ENCODE measurements at regions of chr3 and their contacts with region 1.

Region 1: GRCh38 chr3:141311496-141312353 is 56.6 kb upstream of the ZBTB38 start:
- DNase-seq: peak; percentile 97
- ATAC-seq: peak; percentile 98
- H3K4me3 ChIP-seq: peak overlapping the region; percentile 71 to 96 (median 93)
- H3K4me3 Mint-ChIP-seq: peak overlapping the region; percentile 98
- H3K27ac ChIP-seq: peak overlapping the region; percentile 65 to 78
- H3K27ac Mint-ChIP-seq: peak overlapping the region; percentile 97
- H3K4me1 ChIP-seq: peaks cover 15 to 17% of the 10 kb centered on the region in 2 donors
- H3K4me1 Mint-ChIP-seq: peaks cover 23% of the 10 kb centered on the region
- H3K27me3 ChIP-seq: no peaks in the 10 kb centered on the region
- H3K27me3 Mint-ChIP-seq: no peaks in the 10 kb centered on the region
- CTCF ChIP-seq: peak; percentile 72

Region 2: GRCh38 chr3:140941434-140942220 is 370.1 kb before region 1 on chr3 and contains the start of gene SLC25A36:
- CTCF ChIA-PET with region 1: no interaction called
- POLR2A ChIA-PET with region 1: no interaction called
- intact Hi-C with region 1: loop called (anchors 1 kb)
- DNase-seq: peak; percentile 99
- ATAC-seq: peak; percentile 96
- H3K4me3 ChIP-seq: peak within 1 kb of the TSS; percentile 63 to 86 (median 80)
- H3K4me3 Mint-ChIP-seq: peak within 1 kb of the TSS; percentile 95
- H3K27ac ChIP-seq: peak within 1 kb of the TSS; percentile 91 to 95
- H3K27ac Mint-ChIP-seq: peak within 1 kb of the TSS; percentile 97
- H3K4me1 ChIP-seq: peaks cover 11 to 26% of the 10 kb centered on the region in 2 donors
- H3K4me1 Mint-ChIP-seq: peaks cover 42% of the 10 kb centered on the region
- H3K27me3 ChIP-seq: no peaks in the 10 kb centered on the region
- H3K27me3 Mint-ChIP-seq: no peaks in the 10 kb centered on the region
- CTCF ChIP-seq: no peak
- total RNA-seq, gene SLC25A36: 76.0 and 86.3 TPM in 2 replicates

Region 3: DNA sequence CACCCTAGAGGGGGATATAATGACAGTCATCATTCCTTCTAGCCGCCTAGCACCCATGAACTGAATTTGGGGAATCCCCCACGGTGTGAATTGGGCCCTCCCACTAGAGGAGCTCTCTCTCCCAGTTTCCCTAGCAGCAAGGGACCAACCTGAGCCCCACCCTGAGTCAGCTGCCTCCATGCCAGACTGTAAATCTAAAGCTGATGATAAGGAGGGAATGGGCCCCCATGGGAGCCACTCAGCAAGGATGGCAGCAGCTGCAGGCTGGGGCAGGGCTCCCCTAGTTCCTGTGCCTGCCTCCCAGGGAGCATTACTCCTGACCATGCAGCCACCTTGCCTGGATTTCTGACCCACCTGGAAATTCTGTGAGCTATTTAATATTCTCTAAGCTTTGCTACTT is 137.1 kb before region 1 on chr3:
- CTCF ChIA-PET with region 1: no interaction called
- POLR2A ChIA-PET with region 1: no interaction called
- intact Hi-C with region 1: no loop called
- DNase-seq: no peak
- ATAC-seq: no peak
- H3K4me3 ChIP-seq: no peak overlapping the region
- H3K4me3 Mint-ChIP-seq: no peak overlapping the region
- H3K27ac ChIP-seq: no peak overlapping the region
- H3K27ac Mint-ChIP-seq: no peak overlapping the region
- H3K4me1 ChIP-seq: no peaks in the 10 kb centered on the region
- H3K4me1 Mint-ChIP-seq: no peaks in the 10 kb centered on the region
- H3K27me3 ChIP-seq: peaks cover 0 to 4% (median 1%) of the 10 kb centered on the region in 4 experiments
- H3K27me3 Mint-ChIP-seq: peaks cover 33% of the 10 kb centered on the region
- CTCF ChIP-seq: no peak

Region 4: DNA sequence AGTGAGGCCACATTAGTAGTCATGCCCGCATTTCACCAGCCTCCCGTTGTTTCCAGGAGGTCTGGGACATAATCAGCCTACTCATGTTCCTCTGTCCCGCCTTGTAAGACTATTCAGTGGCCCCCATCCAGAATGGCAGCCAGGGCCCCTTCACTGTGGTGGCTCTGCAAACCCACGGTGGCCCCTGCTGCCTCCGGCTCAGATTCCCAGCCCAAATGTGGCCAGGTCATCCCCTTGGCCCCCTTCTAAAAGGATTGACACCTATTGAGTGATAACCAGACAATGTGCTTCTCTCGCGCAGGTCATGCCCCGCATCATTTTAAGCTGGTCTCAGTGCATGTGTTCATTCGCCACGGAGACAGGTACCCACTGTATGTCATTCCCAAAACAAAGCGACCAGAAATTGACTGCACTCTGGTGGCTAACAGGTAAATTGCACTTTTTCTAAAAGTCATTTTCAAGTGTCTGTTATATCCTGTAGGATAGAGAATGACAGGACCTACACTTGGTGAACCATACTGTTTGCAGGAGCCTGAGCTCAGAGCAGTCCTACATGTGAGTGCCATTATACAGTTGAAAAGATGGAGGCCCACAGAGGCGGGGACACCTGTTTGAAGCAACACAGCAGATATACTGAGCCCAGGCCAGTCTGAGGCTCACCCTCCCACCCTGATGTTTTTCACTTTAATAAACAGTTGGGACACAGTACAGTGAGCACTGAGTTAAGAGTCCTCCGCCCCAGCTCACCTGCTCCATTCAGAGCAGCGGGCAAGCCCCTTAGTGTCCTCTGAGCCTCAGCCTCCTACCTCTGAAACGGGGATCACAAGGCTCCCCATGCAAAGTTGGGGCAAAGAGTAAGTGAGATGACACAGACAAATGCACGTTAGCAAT is 32.4 kb before region 1 on chr3:
- CTCF ChIA-PET with region 1: no interaction called
- POLR2A ChIA-PET with region 1: no interaction called
- intact Hi-C with region 1: no loop called
- DNase-seq: peak; percentile 38
- ATAC-seq: peak; percentile 54
- H3K4me3 ChIP-seq: no peak overlapping the region
- H3K4me3 Mint-ChIP-seq: no peak overlapping the region
- H3K27ac ChIP-seq: no peak overlapping the region
- H3K27ac Mint-ChIP-seq: no peak overlapping the region
- H3K4me1 ChIP-seq: no peaks in the 10 kb centered on the region
- H3K4me1 Mint-ChIP-seq: peaks cover 4% of the 10 kb centered on the region
- H3K27me3 ChIP-seq: no peaks in the 10 kb centered on the region
- H3K27me3 Mint-ChIP-seq: no peaks in the 10 kb centered on the region
- CTCF ChIP-seq: peak; percentile 54

Region 5: GRCh38 chr3:141360888-141361598 is 49.3 kb after region 1 on chr3:
- CTCF ChIA-PET with region 1: interaction called, 23 read pairs
- POLR2A ChIA-PET with region 1: interaction called, 12 read pairs
- intact Hi-C with region 1: no loop called
- DNase-seq: peak; percentile 54
- ATAC-seq: peak; percentile 65
- H3K4me3 ChIP-seq: no peak overlapping the region
- H3K4me3 Mint-ChIP-seq: peak overlapping the region; percentile 3
- H3K27ac ChIP-seq: no peak overlapping the region
- H3K27ac Mint-ChIP-seq: no peak overlapping the region
- H3K4me1 ChIP-seq: no peaks in the 10 kb centered on the region
- H3K4me1 Mint-ChIP-seq: no peaks in the 10 kb centered on the region
- H3K27me3 ChIP-seq: no peaks in the 10 kb centered on the region
- H3K27me3 Mint-ChIP-seq: no peaks in the 10 kb centered on the region
- CTCF ChIP-seq: peak; percentile 58

Region 6: GRCh38 chr3:141402476-141403171 is 90.9 kb after region 1 on chr3:
- CTCF ChIA-PET with region 1: interaction called, 8 read pairs
- POLR2A ChIA-PET with region 1: interaction called, 4 read pairs
- intact Hi-C with region 1: loop called (anchors 1 kb)
- DNase-seq: no peak
- ATAC-seq: peak; percentile 61
- H3K4me3 ChIP-seq: peak overlapping the region; percentile 37 to 83 (median 78)
- H3K4me3 Mint-ChIP-seq: peak overlapping the region; percentile 95
- H3K27ac ChIP-seq: peak overlapping the region; percentile 35 to 90
- H3K27ac Mint-ChIP-seq: peak overlapping the region; percentile 98
- H3K4me1 ChIP-seq: peaks cover 8 to 14% of the 10 kb centered on the region in 2 donors
- H3K4me1 Mint-ChIP-seq: peaks cover 48% of the 10 kb centered on the region
- H3K27me3 ChIP-seq: no peaks in the 10 kb centered on the region
- H3K27me3 Mint-ChIP-seq: no peaks in the 10 kb centered on the region
- CTCF ChIP-seq: no peak

Region 7: GRCh38 chr3:141460097-141460704 is 148.5 kb after region 1 on chr3:
- CTCF ChIA-PET with region 1: interaction called, 404 read pairs
- POLR2A ChIA-PET with region 1: no interaction called
- intact Hi-C with region 1: loop called (anchors 1 kb)
- DNase-seq: peak; percentile 85
- ATAC-seq: peak; percentile 99
- H3K4me3 ChIP-seq: no peak overlapping the region
- H3K4me3 Mint-ChIP-seq: no peak overlapping the region
- H3K27ac ChIP-seq: no peak overlapping the region
- H3K27ac Mint-ChIP-seq: no peak overlapping the region
- H3K4me1 ChIP-seq: peaks cover 9 to 10% of the 10 kb centered on the region in 2 donors
- H3K4me1 Mint-ChIP-seq: peaks cover 13% of the 10 kb centered on the region
- H3K27me3 ChIP-seq: no peaks in the 10 kb centered on the region
- H3K27me3 Mint-ChIP-seq: no peaks in the 10 kb centered on the region
- CTCF ChIP-seq: peak; percentile 92

Region 8: GRCh38 chr3:141738022-141738890 is 426.5 kb after region 1 on chr3 and contains the start of gene RNF7:
- CTCF ChIA-PET with region 1: no interaction called
- POLR2A ChIA-PET with region 1: no interaction called
- intact Hi-C with region 1: loop called (anchors 1 kb)
- DNase-seq: peak; percentile 98
- ATAC-seq: peak; percentile 95
- H3K4me3 ChIP-seq: peak within 1 kb of the TSS; percentile 93 to 99 (median 95)
- H3K4me3 Mint-ChIP-seq: peak within 1 kb of the TSS; percentile 90
- H3K27ac ChIP-seq: peak within 1 kb of the TSS; percentile 81 to 87
- H3K27ac Mint-ChIP-seq: peak within 1 kb of the TSS; percentile 97
- H3K4me1 ChIP-seq: peaks cover 23 to 30% of the 10 kb centered on the region in 2 donors
- H3K4me1 Mint-ChIP-seq: peaks cover 44% of the 10 kb centered on the region
- H3K27me3 ChIP-seq: no peaks in the 10 kb centered on the region
- H3K27me3 Mint-ChIP-seq: no peaks in the 10 kb centered on the region
- CTCF ChIP-seq: peak; percentile 85
- total RNA-seq, gene RNF7: 40.9 and 47.2 TPM in 2 replicates

Region 9: GRCh38 chr3:142447852-142448823 is 1136.4 kb after region 1 on chr3 and contains the start of gene XRN1:
- CTCF ChIA-PET with region 1: no interaction called
- POLR2A ChIA-PET with region 1: no interaction called
- intact Hi-C with region 1: loop called (anchors 2 kb)
- DNase-seq: peak; percentile 94
- ATAC-seq: peak; percentile 98
- H3K4me3 ChIP-seq: peak within 1 kb of the TSS; percentile 85 to 100 (median 98)
- H3K4me3 Mint-ChIP-seq: peak within 1 kb of the TSS; percentile 99
- H3K27ac ChIP-seq: peak within 1 kb of the TSS; percentile 97 to 100
- H3K27ac Mint-ChIP-seq: peak within 1 kb of the TSS; percentile 100
- H3K4me1 ChIP-seq: peaks cover 18 to 24% of the 10 kb centered on the region in 2 donors
- H3K4me1 Mint-ChIP-seq: peaks cover 41% of the 10 kb centered on the region
- H3K27me3 ChIP-seq: no peaks in the 10 kb centered on the region
- H3K27me3 Mint-ChIP-seq: no peaks in the 10 kb centered on the region
- CTCF ChIP-seq: no peak
- total RNA-seq, gene XRN1: 78.6 and 91.8 TPM in 2 replicates